ENCODE measurements at regions of chr1 and their contacts with region 1.

Region 1: DNA sequence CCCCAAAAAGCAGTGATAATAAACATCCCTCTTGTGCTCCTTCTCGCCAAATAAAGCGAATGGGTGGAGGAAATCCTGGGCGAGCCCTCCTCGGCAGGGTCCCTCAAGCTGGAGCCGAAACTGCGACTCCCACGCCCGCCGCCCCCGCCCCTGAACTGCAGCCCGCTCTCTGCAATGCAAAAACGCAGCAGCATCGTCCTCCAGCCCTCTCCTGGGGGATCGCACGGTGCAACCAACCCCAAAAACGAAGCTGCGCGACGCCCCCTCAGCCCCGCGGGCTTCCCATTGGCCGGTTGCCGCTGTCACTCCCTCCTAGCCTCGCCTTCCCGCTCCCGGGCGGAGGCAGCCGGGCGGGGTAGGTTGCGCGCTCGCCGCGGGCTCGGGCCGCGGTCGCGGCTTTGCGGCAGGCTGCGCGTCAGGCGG is at the start of gene TMCC2:
- DNase-seq: peak; percentile 79
- H3K4me3 Mint-ChIP-seq: peak within 1 kb of the TSS; percentile 82
- H3K27ac Mint-ChIP-seq: no peak within 1 kb of the TSS
- H3K4me1 Mint-ChIP-seq: peaks cover 35% of the 10 kb centered on the region
- H3K27me3 Mint-ChIP-seq: peaks cover 40% of the 10 kb centered on the region
- total RNA-seq, gene TMCC2: 1.8 TPM

Region 2: DNA sequence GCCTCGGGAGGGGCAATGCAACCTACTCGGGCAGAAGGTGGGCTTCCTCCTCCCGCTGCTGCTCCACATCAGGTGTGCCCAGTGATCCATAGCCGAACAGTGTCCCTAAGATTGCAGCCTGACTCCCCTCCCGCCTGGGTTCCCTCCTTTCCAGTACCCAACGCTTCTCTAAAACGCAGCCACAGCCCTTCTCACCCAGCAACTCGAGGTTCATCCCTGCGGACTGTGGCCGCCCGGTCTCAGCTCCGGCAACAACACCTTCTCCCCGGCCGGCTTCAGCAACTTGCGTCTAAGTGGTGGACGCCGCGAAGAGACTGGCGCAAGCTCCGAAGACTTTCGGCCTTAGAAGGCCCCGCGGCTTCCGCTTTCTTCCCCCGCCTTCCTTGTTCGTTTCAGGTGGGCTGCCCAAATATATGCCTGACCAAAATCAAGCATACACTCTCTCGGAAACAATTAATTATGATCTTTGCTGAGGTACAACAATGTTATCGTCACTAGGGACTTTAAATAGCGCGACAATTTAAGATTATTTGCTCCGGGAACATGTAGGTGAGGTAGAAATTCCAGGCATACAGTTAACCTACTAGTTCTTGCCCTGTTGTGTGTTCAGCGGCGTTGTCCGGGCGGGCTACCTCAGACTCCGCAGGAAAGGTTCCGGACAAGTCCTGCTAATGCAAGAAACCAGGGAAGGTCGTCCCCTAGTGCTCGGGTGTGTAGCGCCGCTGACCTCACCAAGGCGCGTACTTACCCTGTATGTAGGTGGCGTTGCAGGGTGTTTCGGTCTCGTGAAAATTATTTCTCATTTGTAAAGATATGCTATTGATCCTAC is 105.7 kb before region 1 on chr1 and contains the start of gene RBBP5:
- CTCF ChIA-PET with region 1: interaction called, 9 read pairs
- POLR2A ChIA-PET with region 1: interaction called, 22 read pairs
- DNase-seq: peak; percentile 96
- H3K4me3 Mint-ChIP-seq: peak within 1 kb of the TSS; percentile 91
- H3K27ac Mint-ChIP-seq: peak within 1 kb of the TSS; percentile 94
- H3K4me1 Mint-ChIP-seq: peaks cover 38% of the 10 kb centered on the region
- H3K27me3 Mint-ChIP-seq: no peaks in the 10 kb centered on the region
- total RNA-seq, gene RBBP5: 19.5 to 20.3 TPM

Region 3: GRCh38 chr1:205141236-205142101 is 86.1 kb before region 1 on chr1:
- CTCF ChIA-PET with region 1: interaction called, 12 read pairs
- POLR2A ChIA-PET with region 1: no interaction called
- DNase-seq: peak; percentile 80
- H3K4me3 Mint-ChIP-seq: no peak overlapping the region
- H3K27ac Mint-ChIP-seq: no peak overlapping the region
- H3K4me1 Mint-ChIP-seq: peaks cover 4% of the 10 kb centered on the region
- H3K27me3 Mint-ChIP-seq: no peaks in the 10 kb centered on the region

Region 4: GRCh38 chr1:205199090-205199930 is 28.3 kb before region 1 on chr1:
- CTCF ChIA-PET with region 1: interaction called, 4 read pairs
- POLR2A ChIA-PET with region 1: interaction called, 16 read pairs
- DNase-seq: peak; percentile 24
- H3K4me3 Mint-ChIP-seq: peak overlapping the region; percentile 6
- H3K27ac Mint-ChIP-seq: peak overlapping the region; percentile 9
- H3K4me1 Mint-ChIP-seq: peaks cover 38% of the 10 kb centered on the region
- H3K27me3 Mint-ChIP-seq: no peaks in the 10 kb centered on the region

Region 5: GRCh38 chr1:205211169-205211838 is 16.3 kb before region 1 on chr1 and contains the start of gene DSTYK:
- CTCF ChIA-PET with region 1: interaction called, 9 read pairs
- POLR2A ChIA-PET with region 1: interaction called, 26 read pairs
- DNase-seq: peak; percentile 93
- H3K4me3 Mint-ChIP-seq: peak within 1 kb of the TSS; percentile 87
- H3K27ac Mint-ChIP-seq: peak within 1 kb of the TSS; percentile 81
- H3K4me1 Mint-ChIP-seq: peaks cover 41% of the 10 kb centered on the region
- H3K27me3 Mint-ChIP-seq: no peaks in the 10 kb centered on the region
- total RNA-seq, gene DSTYK: 8.8 to 9.2 TPM

Region 6: DNA sequence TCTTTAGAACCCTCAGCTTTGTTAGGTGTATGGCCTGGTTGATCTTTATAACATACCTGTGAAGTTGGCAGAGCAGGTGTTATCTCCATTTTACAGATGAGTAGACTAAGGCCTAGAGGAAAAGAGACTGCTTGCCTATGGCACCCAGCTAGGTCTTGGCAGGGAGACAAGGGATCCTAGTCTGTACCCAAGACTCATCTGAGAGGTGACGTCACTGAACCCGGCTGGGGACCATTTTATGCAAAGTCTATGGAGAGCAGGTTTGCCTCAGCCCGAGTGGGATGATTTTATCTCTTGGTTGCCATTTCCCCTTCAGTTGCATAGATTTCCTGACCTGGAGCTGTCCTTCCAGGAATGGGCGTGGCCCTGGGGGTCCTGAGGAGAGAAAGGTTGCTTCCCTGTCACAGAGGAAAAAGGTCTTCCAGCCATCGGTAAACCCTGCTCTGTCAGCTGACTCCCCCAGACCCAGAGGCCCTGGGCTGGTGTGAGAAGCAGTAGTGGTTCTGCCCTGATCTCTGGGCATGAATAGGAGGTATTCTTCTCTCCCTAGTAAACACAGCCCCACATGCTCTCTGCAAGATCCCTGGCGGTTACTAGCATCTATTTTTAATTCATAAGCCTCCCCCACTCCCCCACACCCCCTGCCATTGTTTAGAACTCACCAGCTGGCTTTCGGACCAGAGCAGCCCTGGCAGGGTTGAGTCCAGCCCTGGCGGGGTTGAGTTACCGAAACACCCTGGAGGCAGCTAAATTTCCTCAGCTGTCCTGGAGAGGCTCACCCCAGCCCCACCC is 19.7 kb after region 1 on chr1:
- CTCF ChIA-PET with region 1: interaction called, 22 read pairs
- POLR2A ChIA-PET with region 1: no interaction called
- DNase-seq: no peak
- H3K4me3 Mint-ChIP-seq: no peak overlapping the region
- H3K27ac Mint-ChIP-seq: no peak overlapping the region
- H3K4me1 Mint-ChIP-seq: peaks cover 24% of the 10 kb centered on the region
- H3K27me3 Mint-ChIP-seq: peaks cover 6% of the 10 kb centered on the region

Region 7: DNA sequence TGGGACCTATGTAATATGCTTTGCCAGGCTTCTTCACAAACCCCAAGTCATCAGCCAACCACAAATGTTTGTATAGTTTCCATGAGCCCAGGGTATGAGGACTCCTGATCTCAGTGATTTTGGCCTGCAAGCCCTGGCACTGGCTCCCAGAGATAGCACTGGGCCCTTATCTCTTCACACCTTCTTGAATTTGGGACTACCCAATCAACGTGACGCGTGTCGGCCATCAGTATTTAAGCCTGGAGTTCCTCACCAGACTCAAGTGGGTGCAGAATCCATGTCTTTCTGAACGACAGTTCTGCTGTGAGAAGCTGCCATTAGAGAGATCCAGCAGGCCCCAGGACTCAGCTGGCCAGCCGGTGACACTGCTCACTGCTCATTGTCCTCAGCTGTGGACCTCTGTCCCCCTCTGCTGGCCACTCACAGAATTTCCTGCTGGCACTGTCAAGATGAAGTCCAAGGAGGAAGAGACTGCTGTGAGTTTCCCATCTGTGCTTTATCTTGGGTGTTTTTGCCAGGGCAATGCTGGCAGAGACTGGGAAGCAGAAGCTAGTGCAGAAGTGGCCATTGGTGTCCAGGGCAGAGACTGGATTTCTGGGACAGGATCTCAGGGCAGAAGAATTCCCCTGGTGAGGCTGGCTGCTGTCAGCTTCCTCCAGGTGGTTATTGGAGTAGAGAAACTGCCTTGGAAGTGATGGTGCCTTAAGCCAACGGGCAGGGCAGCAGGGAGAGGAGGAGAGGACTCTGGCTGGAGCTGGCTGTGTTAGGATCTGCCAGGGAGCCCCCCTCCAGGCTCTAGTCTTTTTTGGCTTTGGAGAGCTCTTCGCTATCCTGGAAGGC is 28.6 kb after region 1 on chr1:
- CTCF ChIA-PET with region 1: interaction called, 92 read pairs
- POLR2A ChIA-PET with region 1: interaction called, 15 read pairs
- DNase-seq: peak; percentile 87
- H3K4me3 Mint-ChIP-seq: no peak overlapping the region
- H3K27ac Mint-ChIP-seq: no peak overlapping the region
- H3K4me1 Mint-ChIP-seq: no peaks in the 10 kb centered on the region
- H3K27me3 Mint-ChIP-seq: peaks cover 2% of the 10 kb centered on the region

Region 8: GRCh38 chr1:205374228-205375078 is 146.9 kb after region 1 on chr1:
- CTCF ChIA-PET with region 1: no interaction called
- POLR2A ChIA-PET with region 1: no interaction called
- DNase-seq: no peak
- H3K4me3 Mint-ChIP-seq: no peak overlapping the region
- H3K27ac Mint-ChIP-seq: no peak overlapping the region
- H3K4me1 Mint-ChIP-seq: peaks cover 10% of the 10 kb centered on the region
- H3K27me3 Mint-ChIP-seq: peaks cover 37% of the 10 kb centered on the region